Endothelial cell of umbilical vein (primary cell): ENCODE measurements at regions of chr2 and their contacts with region 1.

Region 1: GRCh38 chr2:229780856-229781773 is 66.8 kb upstream of the DNER start:
- DNase-seq: peak; percentile 76
- H3K4me3 ChIP-seq: no peak overlapping the region
- H3K27ac ChIP-seq: peak overlapping the region; percentile 31
- H3K4me1 ChIP-seq: peaks cover 13% of the 10 kb centered on the region
- H3K27me3 ChIP-seq: no peaks in the 10 kb centered on the region
- CTCF ChIP-seq: peak; percentile 74 to 75
- POLR2A ChIP-seq: no peak

Region 2: DNA sequence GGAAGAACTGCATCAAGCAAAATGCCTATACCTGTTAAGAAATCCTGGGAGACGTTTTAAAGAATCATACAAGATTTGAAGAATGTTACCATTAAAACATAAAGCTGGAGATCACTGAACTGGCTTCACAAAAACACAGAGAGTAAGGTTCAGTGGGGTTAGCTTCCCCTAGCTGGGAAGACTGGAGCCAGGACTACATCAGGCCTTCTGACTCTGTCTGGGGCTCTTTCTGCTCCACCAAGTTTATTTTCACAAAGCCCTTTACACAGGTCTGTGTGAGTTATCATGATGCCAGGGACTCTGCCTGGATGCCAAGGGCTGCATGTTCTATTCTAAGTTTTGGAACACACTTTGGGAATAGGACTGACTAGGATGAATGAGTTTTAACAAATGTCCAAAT is 19.5 kb before region 1 on chr2:
- CTCF ChIA-PET with region 1: interaction called, 10 read pairs
- POLR2A ChIA-PET with region 1: no interaction called
- dilution Hi-C with region 1: no loop called
- intact Hi-C with region 1: no loop called
- DNase-seq: no peak
- H3K4me3 ChIP-seq: no peak overlapping the region
- H3K27ac ChIP-seq: no peak overlapping the region
- H3K4me1 ChIP-seq: no peaks in the 10 kb centered on the region
- H3K27me3 ChIP-seq: no peaks in the 10 kb centered on the region
- CTCF ChIP-seq: no peak
- POLR2A ChIP-seq: peak; percentile 19

Region 3: GRCh38 chr2:229980431-229981184 is 199.5 kb after region 1 on chr2:
- CTCF ChIA-PET with region 1: interaction called, 3 read pairs
- POLR2A ChIA-PET with region 1: no interaction called
- dilution Hi-C with region 1: no loop called
- intact Hi-C with region 1: loop called (anchors 2 kb)
- DNase-seq: peak; percentile 90
- H3K4me3 ChIP-seq: no peak overlapping the region
- H3K27ac ChIP-seq: peak overlapping the region; percentile 55
- H3K4me1 ChIP-seq: peaks cover 7% of the 10 kb centered on the region
- H3K27me3 ChIP-seq: no peaks in the 10 kb centered on the region
- CTCF ChIP-seq: no peak
- POLR2A ChIP-seq: no peak